Keratinocyte (primary cell): ENCODE measurements at regions of chr14 and their contacts with region 1.

Region 1: DNA sequence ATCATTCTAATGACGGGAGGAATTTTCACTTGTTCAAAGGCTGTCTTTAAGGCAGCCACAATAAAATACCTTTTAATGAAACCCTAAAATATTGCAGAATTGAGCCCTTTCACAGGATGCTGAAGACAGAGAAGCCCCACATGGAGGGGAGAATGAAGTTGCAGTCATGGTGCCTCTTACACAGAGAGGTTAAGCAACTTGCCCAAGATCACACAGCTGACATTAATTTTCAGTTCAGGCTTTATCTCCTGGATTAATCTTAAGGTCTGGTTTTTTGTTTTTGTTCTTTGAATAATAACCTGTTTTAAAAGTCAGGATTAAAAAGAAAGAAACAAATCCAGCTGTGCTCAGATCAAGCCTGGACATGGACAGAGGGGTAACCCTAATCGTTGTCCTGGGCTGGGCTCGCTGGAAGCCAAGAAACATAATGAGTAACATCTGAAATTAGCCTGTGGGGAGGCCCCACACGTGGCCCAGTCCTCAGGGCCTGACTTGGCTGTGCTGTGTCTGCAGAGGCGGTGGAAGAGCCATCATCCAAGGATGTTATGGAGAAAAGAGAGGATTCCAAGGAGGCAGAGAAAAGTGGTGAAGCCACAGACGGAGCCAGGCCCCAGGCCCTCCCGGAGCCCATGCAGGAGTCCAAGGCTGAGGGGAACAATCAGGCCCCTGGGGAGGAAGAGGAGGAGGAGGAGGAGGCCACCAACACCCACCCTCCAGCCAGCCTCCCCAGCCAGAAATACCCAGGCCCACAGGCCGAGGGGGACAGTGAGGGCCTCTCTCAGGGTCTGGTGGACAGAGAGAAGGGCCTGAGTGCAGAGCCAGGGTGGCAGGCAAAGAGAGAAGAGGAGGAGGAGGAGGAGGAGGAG is 8.0 kb downstream of the CHGA start:
- DNase-seq: no peak
- H3K4me3 ChIP-seq: no peak overlapping the region
- H3K27ac ChIP-seq: no peak overlapping the region
- H3K4me1 ChIP-seq: peaks cover 33% of the 10 kb centered on the region
- H3K27me3 ChIP-seq: no peaks in the 10 kb centered on the region
- CTCF ChIP-seq: no peak

Region 2: GRCh38 chr14:92680781-92681650 is 250.0 kb before region 1 on chr14:
- dilution Hi-C with region 1: no loop called
- DNase-seq: peak; percentile 40
- H3K4me3 ChIP-seq: no peak overlapping the region
- H3K27ac ChIP-seq: no peak overlapping the region
- H3K4me1 ChIP-seq: peaks cover 5% of the 10 kb centered on the region
- H3K27me3 ChIP-seq: no peaks in the 10 kb centered on the region
- CTCF ChIP-seq: peak; percentile 81 to 93 (median 92)

Region 3: DNA sequence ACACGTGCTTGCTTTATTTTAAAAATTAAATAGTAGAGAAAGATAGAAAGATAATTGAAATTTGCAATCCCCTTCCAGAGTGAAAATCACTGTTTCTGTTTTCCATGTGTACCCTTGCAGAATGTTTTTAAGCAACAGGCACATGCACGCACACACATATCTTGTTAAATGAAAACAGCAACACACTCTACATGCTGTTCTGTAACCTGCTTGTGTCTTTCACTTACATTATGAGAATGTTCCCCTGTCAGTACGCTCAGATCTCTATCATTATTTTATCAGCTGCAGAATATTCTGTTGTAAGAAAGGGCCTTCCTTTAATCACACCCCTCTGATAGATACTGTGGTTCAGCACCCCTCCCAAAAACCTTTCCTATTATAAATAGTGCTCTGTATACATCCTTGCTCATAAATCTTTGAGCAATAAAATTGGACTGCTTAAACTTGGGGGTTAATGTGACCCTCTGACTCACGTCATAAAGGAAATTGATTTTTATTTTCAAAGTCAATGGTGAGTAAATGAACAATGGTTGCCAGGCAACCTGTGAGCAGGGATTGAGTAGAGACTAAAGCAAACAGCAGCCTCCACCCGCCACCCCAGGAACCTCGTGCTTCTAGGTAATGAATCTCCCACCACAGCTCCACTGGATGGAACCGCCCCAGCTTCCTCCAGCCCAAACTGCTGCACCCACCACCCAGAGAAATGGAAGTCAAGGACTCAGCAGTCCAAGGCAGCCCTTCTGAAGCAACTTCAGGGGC is 40.0 kb before region 1 on chr14:
- dilution Hi-C with region 1: loop called (anchors 5 kb)
- DNase-seq: no peak
- H3K4me3 ChIP-seq: no peak overlapping the region
- H3K27ac ChIP-seq: no peak overlapping the region
- H3K4me1 ChIP-seq: no peaks in the 10 kb centered on the region
- H3K27me3 ChIP-seq: peaks cover 7% of the 10 kb centered on the region
- CTCF ChIP-seq: no peak